ENCODE measurements at regions of chr10 and their contacts with region 1.

Region 1: DNA sequence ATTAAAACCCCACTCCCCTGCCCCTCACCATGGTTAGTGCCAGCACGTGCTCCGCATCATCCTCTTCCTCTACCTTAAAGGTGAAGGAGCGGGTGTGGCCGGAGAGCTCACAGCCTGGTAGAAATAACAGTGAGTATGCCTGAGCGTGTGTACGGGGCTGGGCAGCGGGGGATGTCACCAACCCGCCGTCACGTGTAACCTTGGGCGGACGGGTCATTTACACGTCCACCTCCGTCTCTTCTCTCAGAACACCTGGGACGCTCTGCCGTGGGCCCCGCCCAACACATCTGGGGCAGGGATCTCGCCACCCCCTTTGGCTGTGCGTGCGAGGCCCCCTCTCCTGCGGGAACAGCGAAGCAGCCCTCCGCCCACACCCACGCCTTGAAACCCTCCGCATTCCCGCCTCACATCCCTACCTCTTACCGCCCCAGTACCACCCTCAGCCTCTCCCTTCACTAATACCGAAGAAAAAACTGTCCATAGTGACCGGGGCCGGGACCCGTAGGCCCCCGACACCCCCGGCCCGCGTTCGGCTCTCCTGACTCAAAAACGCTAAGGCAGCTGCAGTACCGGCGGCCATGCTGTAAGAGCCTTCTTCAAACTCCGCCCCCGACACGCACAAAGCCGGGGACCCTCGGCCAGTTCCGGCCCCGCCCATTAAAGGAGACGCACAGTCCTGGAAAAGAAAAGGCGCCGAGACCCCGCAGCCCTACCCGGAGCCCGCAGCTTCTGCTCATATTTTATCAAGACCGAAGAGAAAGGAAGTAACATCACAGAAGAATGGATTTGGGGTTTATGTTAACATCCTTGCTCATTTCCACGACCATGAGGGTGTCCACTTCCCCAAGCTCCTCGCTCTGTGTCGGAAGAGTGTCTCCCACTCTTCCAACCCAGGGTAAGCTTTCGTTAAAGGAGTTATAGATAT is at the start of gene NPM3:
- DNase-seq: peak; percentile 85 to 94
- H3K4me3 ChIP-seq: peak within 1 kb of the TSS; percentile 85
- H3K4me1 ChIP-seq: peaks cover 21% of the 10 kb centered on the region
- H3K27me3 ChIP-seq: no peaks in the 10 kb centered on the region

Region 2: GRCh38 chr10:101536800-101537199 is 246.3 kb before region 1 on chr10:
- in situ Hi-C with region 1: no loop called
- DNase-seq: peak in 1 of 2 experiments; percentile 20
- H3K4me3 ChIP-seq: no peak overlapping the region
- H3K4me1 ChIP-seq: peaks cover 18% of the 10 kb centered on the region
- H3K27me3 ChIP-seq: no peaks in the 10 kb centered on the region

Region 3: DNA sequence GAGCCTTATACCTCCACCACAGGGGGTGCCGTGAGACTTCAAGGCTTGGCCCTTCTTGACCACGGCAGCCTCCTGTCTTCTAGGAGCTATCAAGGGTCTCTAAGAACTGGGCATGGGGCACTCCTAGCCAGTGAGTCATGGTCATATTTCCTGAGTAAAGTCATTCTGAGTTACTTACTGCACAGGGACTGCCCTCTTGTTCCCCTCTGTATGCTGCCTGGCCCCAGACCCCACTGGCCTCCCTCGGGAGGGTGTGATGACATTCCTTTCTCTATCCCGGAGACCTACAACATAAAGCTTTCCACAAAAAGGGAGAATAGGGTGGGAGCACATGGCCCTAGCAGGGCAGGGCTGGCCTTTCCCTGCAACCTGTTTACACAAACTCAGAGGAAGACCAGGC is 173.6 kb before region 1 on chr10:
- in situ Hi-C with region 1: loop called (anchors 5 kb)
- DNase-seq: no peak
- H3K4me3 ChIP-seq: no peak overlapping the region
- H3K4me1 ChIP-seq: no peaks in the 10 kb centered on the region
- H3K27me3 ChIP-seq: no peaks in the 10 kb centered on the region

Region 4: DNA sequence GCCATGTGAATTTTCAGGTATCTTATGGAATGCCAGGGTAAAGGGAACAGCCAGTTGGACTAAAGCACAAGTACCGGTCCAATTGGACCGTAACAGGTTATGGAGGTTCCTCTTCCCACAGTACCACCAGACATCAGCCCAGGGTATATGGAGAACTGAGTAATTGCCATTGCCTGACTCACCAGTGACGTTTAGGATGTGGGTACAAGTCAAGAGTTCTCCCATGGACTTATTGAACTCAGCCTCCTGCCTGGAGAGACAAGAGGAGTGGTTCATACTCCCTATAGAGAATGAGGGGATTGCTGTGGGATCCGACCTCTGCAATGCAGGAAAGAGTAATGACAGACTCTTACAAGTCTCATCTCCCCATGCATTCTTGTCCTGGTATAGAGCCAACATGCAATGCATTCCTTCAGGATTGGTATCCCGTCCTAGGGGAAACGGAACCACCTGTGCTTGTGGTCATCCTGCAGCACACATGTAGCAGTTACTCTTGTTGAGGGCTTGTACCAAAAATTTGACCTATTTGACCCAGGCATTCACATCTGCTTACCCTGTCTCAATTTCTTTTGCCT is 412.3 kb after region 1 on chr10:
- in situ Hi-C with region 1: no loop called
- DNase-seq: no peak
- H3K4me3 ChIP-seq: no peak overlapping the region
- H3K4me1 ChIP-seq: no peaks in the 10 kb centered on the region
- H3K27me3 ChIP-seq: no peaks in the 10 kb centered on the region

Region 5: DNA sequence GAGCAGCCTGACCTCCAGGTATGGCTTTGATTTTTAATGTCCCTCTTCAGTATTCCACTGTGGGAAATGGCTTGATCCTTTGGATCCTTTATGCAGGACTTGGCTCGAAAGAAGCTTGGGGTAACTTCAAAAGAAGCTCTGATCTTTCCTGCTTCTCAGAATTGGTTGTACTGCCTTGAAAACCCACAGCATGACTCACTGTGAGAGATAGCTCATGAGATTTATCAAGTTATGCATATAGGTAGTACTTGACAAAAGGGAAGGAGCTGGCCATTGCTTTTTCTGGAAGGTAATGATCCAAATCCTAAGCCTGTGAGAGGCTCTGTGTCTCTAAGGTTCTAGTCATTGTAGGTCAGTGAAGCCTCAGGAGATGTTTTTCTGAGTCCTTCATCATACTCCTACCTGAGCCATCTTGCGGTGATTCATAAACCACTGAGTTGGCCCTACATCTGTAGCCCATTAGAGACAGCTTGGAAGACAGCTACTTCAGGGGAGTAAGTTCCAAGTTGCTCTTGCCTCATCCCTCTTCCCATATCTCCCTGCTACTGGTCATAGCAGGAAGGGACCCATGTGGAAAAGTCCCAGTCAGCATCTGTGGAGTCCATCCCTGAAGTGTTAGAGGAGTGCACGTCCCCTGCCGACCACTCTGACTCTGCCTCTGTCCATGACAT is 575.8 kb after region 1 on chr10:
- in situ Hi-C with region 1: no loop called
- DNase-seq: no peak
- H3K4me3 ChIP-seq: no peak overlapping the region
- H3K4me1 ChIP-seq: no peaks in the 10 kb centered on the region
- H3K27me3 ChIP-seq: no peaks in the 10 kb centered on the region

Measured in HAP-1 (cell line).